Gastrocnemius medialis (tissue), 4 donors: ENCODE measurements at regions of chrX and their contacts with region 1.

Region 1: DNA sequence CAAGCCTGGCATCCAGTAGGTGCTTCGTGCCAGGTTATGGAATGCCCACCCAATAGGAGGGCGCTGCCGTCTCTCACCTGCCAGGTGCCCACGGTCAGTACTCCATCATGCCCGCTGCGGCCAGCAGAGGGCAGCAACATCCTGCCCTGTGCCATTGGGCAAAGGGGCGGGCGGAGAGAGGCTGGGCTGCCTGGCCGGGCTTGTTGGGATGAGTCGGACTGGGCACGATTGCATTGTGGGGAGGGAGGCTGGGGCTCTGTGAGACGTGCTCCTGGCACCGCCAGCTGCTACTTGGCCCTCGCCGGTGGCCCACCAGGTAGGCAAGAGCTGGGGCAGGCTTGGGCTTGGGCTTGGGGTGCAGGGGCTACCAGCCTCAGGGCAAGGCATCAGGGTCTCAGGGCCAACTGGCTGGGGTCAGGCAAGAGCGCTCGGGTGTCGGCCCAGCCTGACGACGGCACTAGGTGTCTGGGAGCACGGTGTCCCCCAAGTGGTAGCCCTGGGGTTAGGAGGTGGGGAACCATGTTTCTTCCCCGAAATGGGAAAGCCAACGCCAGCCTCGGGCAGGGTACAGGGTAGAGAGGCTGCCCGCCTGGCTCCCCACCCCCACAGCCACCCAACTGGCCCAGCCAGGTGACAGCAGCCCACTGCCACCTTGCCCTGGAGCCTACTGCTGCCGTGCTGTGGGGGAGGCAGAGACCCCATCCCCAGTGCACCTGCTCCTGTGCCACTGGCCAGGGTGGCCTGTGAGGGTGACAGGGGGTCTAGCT is at the start of gene PLXNB3:
- DNase-seq: peak; percentile 41 to 68
- ATAC-seq: peak; percentile 62 to 84
- H3K4me3 ChIP-seq: no peak within 1 kb of the TSS
- H3K27ac ChIP-seq: no peak within 1 kb of the TSS
- H3K4me1 ChIP-seq: no peaks in the 10 kb centered on the region
- H3K27me3 ChIP-seq: no peaks in the 10 kb centered on the region
- CTCF ChIP-seq: peak; percentile 63 to 90 (median 82)
- POLR2A ChIP-seq: no peak
- total RNA-seq, gene PLXNB3: 0.10 to 1.1 (median 0.13) TPM

Region 2: GRCh38 chrX:153673428-153674218 is 90.5 kb before region 1 on chrX and contains the start of gene PNCK:
- in situ Hi-C with region 1: no loop called
- intact Hi-C with region 1: no loop called
- DNase-seq: no peak
- ATAC-seq: no peak
- H3K4me3 ChIP-seq: no peak within 1 kb of the TSS
- H3K27ac ChIP-seq: no peak within 1 kb of the TSS
- H3K4me1 ChIP-seq: no peaks in the 10 kb centered on the region
- H3K27me3 ChIP-seq: peaks cover 0 to 12% (median 11%) of the 10 kb centered on the region in 3 donors
- CTCF ChIP-seq: no peak
- POLR2A ChIP-seq: no peak
- total RNA-seq, gene PNCK: 0.98 to 1.6 TPM in 2 of 4 donors, not detected in the others

Region 3: GRCh38 chrX:153782313-153782712 is 18.1 kb after region 1 on chrX:
- in situ Hi-C with region 1: no loop called
- intact Hi-C with region 1: loop called (anchors 1 kb)
- DNase-seq: peak; percentile 30 to 81
- ATAC-seq: peak; percentile 35 to 65
- H3K4me3 ChIP-seq: peak overlapping the region in 1 of 4 donors; percentile 52
- H3K27ac ChIP-seq: peak overlapping the region; percentile 88 to 94 (median 90)
- H3K4me1 ChIP-seq: peaks cover 0 to 30% of the 10 kb centered on the region in 2 donors
- H3K27me3 ChIP-seq: no peaks in the 10 kb centered on the region
- CTCF ChIP-seq: peak in 3 of 5 experiments; percentile 13 to 44 (median 26)
- POLR2A ChIP-seq: no peak

Region 4: GRCh38 chrX:153953342-153953830 is 189.2 kb after region 1 on chrX:
- in situ Hi-C with region 1: no loop called
- intact Hi-C with region 1: loop called (anchors 2 kb)
- DNase-seq: peak; percentile 32 to 60
- ATAC-seq: peak; percentile 67 to 82
- H3K4me3 ChIP-seq: no peak overlapping the region
- H3K27ac ChIP-seq: peak overlapping the region in 1 of 4 donors; percentile 59
- H3K4me1 ChIP-seq: no peaks in the 10 kb centered on the region
- H3K27me3 ChIP-seq: no peaks in the 10 kb centered on the region
- CTCF ChIP-seq: peak; percentile 81 to 98 (median 97)
- POLR2A ChIP-seq: no peak